Head of caudate nucleus (tissue), 42 donors: ENCODE measurements at regions of chr10 and their contacts with region 1.

Region 1: DNA sequence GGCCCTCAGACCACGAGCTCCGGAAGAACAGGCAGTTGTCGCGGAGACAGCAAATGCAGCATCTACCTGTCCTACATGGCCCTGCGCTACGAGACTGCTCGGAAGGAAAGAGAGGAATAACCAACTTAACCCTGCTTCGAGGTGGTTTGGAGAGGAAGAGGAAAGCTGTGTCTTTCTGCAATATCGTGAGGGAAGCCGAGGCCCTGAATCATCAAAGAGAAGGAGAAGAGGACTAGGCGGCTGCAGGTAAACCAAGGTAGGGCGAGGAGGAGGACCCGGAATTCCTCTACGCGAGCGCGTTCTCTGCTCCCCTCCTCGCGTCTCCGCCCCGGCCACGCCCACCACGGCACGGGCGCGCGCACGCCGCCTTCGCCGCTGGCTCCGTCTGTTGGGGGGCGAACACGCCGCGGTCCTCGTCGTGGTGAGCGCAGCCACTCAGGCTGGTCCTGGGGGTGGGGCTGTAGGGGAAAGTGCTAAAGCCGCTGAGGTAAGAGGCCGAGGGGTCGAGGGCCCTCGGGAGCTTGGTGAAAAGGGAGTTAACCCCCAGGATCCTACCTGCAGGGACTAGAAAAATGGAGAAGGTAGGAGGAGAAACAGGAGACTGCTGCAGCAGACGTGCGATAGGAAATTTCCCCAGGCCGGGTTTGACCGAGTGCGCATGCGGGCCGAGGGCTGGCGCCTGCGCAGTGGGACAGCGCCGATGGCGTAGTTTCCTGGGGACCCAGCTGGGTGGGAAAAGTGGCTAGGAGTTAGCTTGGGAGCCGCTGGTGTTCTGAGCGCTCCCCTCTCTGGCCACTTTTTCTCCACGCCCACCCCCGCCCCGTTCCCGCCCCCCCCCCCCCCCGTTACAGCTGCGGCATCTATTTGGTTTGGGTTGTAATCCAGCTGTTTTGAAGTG is at the starts of genes ANAPC16 and ASCC1:
- DNase-seq: peak; percentile 73 to 97 (median 94)

Region 2: DNA sequence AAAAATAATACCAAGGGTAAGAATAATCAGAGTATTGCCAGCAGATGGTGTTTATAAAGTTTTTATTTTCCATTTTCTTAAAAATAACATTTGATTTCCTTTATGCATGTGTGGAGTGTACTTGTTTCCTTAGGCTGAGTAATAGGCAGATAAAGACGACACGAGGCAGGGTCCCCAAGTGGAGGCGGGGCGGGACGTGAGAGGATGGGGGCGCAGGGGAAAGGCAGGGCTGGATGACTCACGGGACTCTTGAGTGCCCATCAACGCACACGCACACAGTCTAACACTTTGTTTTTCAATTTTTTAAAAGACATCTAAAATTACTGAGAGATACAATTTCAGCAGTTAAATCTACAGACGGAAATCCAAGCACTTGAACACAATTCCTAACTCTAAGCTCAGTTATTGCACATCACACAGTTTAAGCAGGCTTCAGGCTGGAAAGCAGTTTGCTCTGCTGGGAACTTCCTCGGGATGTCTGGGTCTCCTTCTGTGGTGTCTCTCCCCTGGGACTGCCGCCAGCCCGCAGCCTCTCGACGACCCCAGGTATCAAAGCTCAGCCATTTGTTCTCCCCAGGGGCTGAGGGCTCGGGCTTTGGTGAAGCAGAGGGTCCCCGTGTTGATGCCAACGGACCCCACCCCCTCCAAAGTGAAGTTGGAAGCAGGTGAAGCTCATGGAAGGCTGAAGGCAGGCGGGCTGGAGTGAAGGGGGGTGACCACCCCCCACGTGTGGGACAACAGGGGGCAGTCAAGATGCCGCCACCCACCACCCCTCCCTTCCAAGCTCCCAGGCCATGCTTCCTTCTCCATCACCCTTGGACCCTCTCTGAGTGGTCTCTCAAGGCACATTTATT is 156.7 kb before region 1 on chr10:
- intact Hi-C with region 1: loop called (anchors 10 kb)
- DNase-seq: peak in 5 of 42 donors; percentile 31 to 62 (median 48)

Region 3: GRCh38 chr10:72133517-72133916 is 82.4 kb before region 1 on chr10:
- intact Hi-C with region 1: loop called (anchors 5 kb)
- DNase-seq: no peak

Region 4: GRCh38 chr10:72273410-72274212 is 57.7 kb after region 1 on chr10 and contains the start of gene DDIT4:
- intact Hi-C with region 1: loop called (anchors 10 kb)
- DNase-seq: peak; percentile 99 to 100 (median 100)

Region 5: GRCh38 chr10:72297968-72298773 is 82.3 kb after region 1 on chr10:
- intact Hi-C with region 1: no loop called
- DNase-seq: peak; percentile 95 to 100 (median 99)

Region 6: DNA sequence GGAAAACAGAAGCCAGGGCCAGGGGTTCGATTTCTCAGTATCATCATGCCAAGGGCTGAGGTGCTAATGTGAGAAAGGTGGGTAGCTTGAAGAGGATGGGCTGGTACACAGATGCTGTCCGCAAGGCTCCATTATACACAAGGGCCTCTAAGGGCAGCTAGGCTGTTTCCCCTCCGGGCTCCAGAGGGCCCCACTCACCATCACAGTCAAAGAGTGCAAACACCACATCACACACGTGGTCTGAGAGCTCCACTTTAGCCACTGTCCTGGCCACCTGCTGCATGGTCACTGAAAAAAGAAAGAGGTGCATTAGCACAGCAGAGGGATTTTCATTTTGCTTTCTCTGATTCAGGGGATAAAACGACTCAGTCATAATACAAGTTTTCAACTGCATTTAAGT is 159.7 kb after region 1 on chr10:
- intact Hi-C with region 1: no loop called
- DNase-seq: peak in 41 of 42 donors; percentile 24 to 81 (median 59)

Region 7: DNA sequence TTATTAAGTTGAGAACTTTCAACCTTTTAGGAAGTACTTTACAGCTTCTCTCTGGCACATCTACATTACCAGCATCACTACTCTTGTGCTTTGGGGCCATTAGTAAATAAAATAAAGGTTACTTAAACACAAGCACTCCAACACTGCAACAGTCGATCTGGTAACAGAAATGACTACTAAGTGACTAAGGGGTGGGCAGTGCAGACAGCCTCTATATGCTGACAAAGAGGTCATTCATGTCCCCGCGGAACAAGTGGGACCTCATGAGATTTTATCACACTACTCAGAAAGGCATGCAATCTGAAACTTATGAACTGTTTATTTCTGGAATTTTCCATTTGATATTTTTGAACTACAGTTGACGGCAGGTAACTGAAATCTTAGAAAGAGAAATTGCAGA is 250.1 kb after region 1 on chr10:
- intact Hi-C with region 1: no loop called
- DNase-seq: peak in 25 of 42 donors; percentile 8 to 68 (median 43)